Mammary epithelial cell (primary cell): ENCODE measurements at regions of chr4 and their contacts with region 1.

Region 1: DNA sequence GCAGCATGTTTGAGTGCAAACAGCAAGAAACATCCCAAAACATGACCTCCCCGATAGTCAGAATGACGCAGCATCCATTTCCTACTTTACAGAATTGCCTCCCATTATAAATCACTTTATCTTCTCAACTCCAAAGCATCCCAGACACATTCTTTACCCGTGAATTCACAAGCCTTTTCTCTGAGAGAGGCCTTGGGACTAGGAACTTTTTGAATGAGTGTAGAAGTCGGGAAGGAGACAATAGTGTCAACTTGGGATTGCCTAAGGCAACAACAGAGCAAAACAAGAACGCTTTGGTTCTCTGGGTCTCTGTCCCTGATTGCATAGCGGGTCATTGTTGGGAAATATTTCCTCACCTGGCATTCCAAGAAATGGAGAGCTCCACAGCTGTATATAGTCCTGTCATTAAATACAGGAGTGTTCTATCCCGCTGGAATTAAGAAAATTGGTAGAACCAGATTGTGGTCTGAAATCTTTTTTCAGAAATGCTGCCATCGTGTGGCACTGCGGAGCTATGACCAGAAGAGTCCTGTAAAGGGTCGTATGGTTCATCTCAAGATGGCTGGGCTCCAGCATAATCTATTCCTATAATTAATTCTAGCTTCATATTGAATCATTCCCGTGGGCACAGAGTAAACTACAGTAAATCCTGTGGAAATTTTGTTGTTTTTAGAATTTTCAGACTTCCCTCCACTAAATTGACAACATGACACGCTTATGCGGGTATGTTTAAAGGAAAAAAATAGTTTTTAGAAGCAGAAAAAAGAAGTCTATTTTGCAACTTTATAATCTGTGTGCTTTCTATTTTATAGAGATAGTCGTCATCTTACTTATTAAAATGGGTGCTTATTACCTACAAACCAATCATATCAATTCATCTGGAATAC is 2.0 kb upstream of the SPP1 start:
- DNase-seq: peak; percentile 79
- H3K4me3 ChIP-seq: peak overlapping the region; percentile 12 to 30 (median 23)
- H3K27ac ChIP-seq: peak overlapping the region; percentile 41
- H3K4me1 ChIP-seq: peaks cover 17% of the 10 kb centered on the region
- H3K27me3 ChIP-seq: no peaks in the 10 kb centered on the region
- CTCF ChIP-seq: peak; percentile 75 to 82

Region 2: GRCh38 chr4:87363567-87363966 is 610.0 kb before region 1 on chr4:
- CTCF ChIA-PET with region 1: no interaction called
- dilution Hi-C with region 1: no loop called
- in situ Hi-C with region 1: no loop called
- intact Hi-C with region 1: loop called (anchors 10 kb)
- DNase-seq: peak; percentile 31
- H3K4me3 ChIP-seq: no peak overlapping the region
- H3K27ac ChIP-seq: no peak overlapping the region
- H3K4me1 ChIP-seq: no peaks in the 10 kb centered on the region
- H3K27me3 ChIP-seq: no peaks in the 10 kb centered on the region
- CTCF ChIP-seq: no peak

Region 3: GRCh38 chr4:88027611-88028608 is 54.4 kb after region 1 on chr4:
- CTCF ChIA-PET with region 1: no interaction called
- dilution Hi-C with region 1: no loop called
- in situ Hi-C with region 1: no loop called
- intact Hi-C with region 1: no loop called
- DNase-seq: peak; percentile 95
- H3K4me3 ChIP-seq: no peak overlapping the region
- H3K27ac ChIP-seq: peak overlapping the region; percentile 99
- H3K4me1 ChIP-seq: peaks cover 20% of the 10 kb centered on the region
- H3K27me3 ChIP-seq: no peaks in the 10 kb centered on the region
- CTCF ChIP-seq: no peak